AG04450 (cell line): ENCODE measurements at regions of chr4 and their contacts with region 1.

Region 1: DNA sequence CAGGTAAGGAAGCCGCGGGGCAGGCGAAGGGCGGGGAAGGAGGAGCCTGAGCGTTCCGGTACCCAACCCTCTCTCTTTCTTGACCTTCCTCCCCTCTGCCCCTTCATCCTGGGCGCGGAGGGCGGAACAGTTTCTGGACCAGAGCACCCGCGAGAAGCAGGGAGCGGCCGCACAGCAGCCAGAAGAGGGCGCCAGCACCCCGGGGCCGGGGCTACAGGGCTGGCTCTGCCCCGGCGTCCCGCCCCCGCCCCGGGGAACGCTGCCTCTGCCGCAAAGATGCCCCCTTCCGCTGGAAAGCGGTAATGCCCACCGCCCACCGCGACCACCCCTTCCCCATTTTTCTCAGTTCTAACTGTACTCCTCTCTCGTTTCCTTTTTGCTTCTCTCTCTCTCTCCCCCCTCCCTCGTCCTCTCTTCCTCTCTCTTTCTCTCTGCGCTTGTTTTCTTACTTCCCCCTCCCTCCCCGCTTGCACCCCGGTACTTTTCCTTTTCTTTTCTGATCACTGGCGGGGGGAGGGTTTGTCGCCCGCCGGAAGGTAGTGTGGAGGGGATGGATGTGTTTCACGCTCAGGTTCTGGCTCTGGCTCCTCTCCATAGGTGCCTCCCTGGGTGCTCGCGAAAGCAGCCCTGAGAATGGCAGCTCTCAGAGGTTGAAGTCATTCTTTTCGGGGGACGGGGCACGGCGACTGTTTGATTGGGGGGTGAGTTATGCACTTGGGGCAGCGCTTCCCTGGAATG is 13.1 kb upstream of the PRDM8 start:
- DNase-seq: no peak
- H3K4me3 ChIP-seq: peak overlapping the region; percentile 90
- H3K27ac ChIP-seq: peak overlapping the region; percentile 61
- H3K27me3 ChIP-seq: no peaks in the 10 kb centered on the region
- CTCF ChIP-seq: peak; percentile 90

Region 2: DNA sequence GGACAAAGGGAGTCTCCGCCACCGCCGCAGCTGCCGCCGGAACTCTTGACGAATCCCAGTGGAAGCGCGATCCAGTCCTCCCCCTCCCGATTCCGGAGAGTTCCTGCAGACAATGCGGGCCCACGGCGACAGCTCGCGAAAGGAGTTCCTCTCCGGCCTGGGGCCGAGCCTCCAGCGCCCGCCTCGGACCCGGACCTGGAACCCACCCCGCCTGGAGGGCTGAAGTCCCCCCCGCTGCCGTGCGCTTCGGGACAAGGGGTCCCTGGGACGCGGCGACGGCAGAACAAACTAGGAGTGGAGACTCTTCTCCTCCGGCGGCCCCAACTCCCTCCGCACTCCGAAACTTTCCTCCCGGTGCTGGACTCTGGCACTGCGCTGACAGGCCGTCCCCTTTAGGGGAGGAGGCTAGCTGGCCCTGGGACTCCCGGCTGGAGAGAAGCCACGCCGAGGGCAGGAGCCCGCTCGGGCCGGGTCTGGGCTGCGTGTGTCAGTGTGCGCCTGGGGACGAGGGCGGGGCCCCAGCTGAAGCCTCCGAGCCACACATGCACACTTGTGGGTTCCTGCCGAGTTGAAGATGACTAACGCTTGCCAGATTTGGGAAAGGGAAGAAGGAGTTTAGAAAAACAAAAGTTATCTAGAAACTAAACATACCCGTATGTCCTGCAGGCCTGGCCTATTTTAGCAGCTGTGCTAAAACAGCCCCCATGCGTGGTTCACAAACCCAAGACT is 111.3 kb before region 1 on chr4 and contains the start of gene ANTXR2:
- CTCF ChIA-PET with region 1: interaction called, 10 read pairs
- POLR2A ChIA-PET with region 1: interaction called, 25 read pairs
- DNase-seq: peak; percentile 93
- H3K4me3 ChIP-seq: peak within 1 kb of the TSS; percentile 83
- H3K27ac ChIP-seq: peak within 1 kb of the TSS; percentile 85
- H3K27me3 ChIP-seq: no peaks in the 10 kb centered on the region
- CTCF ChIP-seq: no peak
- polyA plus RNA-seq, gene ANTXR2: 87.7 and 105 TPM in 2 replicates

Region 3: GRCh38 chr4:80196922-80197573 is 12.8 kb after region 1 on chr4 and contains the start of gene PRDM8:
- CTCF ChIA-PET with region 1: interaction called, 82 read pairs
- POLR2A ChIA-PET with region 1: interaction called, 8 read pairs
- DNase-seq: no peak
- H3K4me3 ChIP-seq: peak within 1 kb of the TSS; percentile 69
- H3K27ac ChIP-seq: peak within 1 kb of the TSS; percentile 61
- H3K27me3 ChIP-seq: no peaks in the 10 kb centered on the region
- CTCF ChIP-seq: no peak
- polyA plus RNA-seq, gene PRDM8: 12.8 and 14.3 TPM in 2 replicates

Region 4: DNA sequence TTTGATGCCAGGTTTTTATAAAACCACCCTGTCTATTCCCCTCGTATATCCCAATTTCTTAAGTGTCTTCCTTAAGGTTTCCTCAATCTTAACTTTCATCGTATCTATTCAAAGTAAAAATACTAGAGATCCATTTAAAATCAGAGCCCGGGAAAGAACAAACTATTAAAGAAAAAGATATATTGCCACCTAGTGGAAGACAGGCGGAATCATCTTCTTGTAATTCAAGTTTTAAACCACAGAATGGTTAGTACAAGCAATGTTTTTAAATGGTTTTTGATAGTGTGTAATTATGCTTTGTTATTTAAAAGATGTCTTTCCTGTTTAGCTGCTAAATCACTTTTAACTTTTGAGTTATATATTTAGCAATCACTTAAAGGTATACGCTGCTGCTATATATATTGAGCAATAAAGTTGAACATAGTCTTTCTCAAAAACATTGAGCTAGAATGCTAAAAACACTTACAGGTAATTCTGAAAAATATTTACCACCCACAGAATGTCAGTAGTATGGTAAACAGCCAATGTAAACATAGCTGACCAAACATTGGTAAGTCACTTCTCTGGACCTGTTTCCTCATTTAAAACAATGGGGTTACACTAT is 31.3 kb after region 1 on chr4:
- CTCF ChIA-PET with region 1: interaction called, 10 read pairs
- POLR2A ChIA-PET with region 1: no interaction called
- DNase-seq: no peak
- H3K4me3 ChIP-seq: no peak overlapping the region
- H3K27ac ChIP-seq: no peak overlapping the region
- H3K27me3 ChIP-seq: no peaks in the 10 kb centered on the region
- CTCF ChIP-seq: peak; percentile 67